ENCODE measurements at regions of chr12 and their contacts with region 1.

Region 1: DNA sequence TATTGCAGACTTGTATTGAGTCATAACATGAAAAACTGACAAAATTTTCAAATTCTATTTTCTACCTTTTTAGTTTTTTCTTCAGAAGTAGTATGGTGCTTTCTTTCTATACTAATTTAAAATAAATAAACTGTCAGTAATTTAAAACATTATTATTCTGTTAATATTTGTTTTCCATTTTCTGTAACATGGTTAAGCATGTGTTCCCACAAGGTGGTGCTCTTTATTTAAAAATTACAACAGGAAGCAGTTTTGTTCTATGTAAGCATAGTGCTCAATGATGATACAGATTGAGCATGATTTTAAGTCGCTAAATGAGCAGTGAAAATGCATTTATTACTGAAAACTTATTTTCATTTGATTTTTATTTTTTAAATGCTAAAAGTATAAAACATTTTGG is 114.6 kb downstream of the PPFIA2 start:
- DNase-seq: peak; percentile 38
- ATAC-seq: no peak
- H3K4me3 ChIP-seq: no peak overlapping the region
- H3K27ac ChIP-seq: no peak overlapping the region
- H3K4me1 ChIP-seq: no peaks in the 10 kb centered on the region
- H3K27me3 ChIP-seq: no peaks in the 10 kb centered on the region
- CTCF ChIP-seq: peak; percentile 43
- EP300 ChIP-seq: no peak
- POLR2A ChIP-seq: no peak
- RAD21 ChIP-seq: no peak

Region 2: GRCh38 chr12:81668475-81668874 is 24.0 kb after region 1 on chr12:
- CTCF ChIA-PET with region 1: no interaction called
- POLR2A ChIA-PET with region 1: no interaction called
- in situ Hi-C with region 1: no loop called
- intact Hi-C with region 1: no loop called
- DNase-seq: no peak
- ATAC-seq: no peak
- H3K4me3 ChIP-seq: no peak overlapping the region
- H3K27ac ChIP-seq: no peak overlapping the region
- H3K4me1 ChIP-seq: no peaks in the 10 kb centered on the region
- H3K27me3 ChIP-seq: no peaks in the 10 kb centered on the region
- CTCF ChIP-seq: no peak
- EP300 ChIP-seq: no peak
- POLR2A ChIP-seq: no peak
- RAD21 ChIP-seq: no peak

Region 3: GRCh38 chr12:81797100-81797499 is 152.6 kb after region 1 on chr12:
- CTCF ChIA-PET with region 1: interaction called, 3 read pairs
- POLR2A ChIA-PET with region 1: no interaction called
- in situ Hi-C with region 1: no loop called
- intact Hi-C with region 1: loop called (anchors 10 kb)
- DNase-seq: peak; percentile 6
- ATAC-seq: peak; percentile 66
- H3K4me3 ChIP-seq: no peak overlapping the region
- H3K27ac ChIP-seq: no peak overlapping the region
- H3K4me1 ChIP-seq: no peaks in the 10 kb centered on the region
- H3K27me3 ChIP-seq: no peaks in the 10 kb centered on the region
- CTCF ChIP-seq: no peak
- EP300 ChIP-seq: no peak
- POLR2A ChIP-seq: no peak
- RAD21 ChIP-seq: no peak

Region 4: DNA sequence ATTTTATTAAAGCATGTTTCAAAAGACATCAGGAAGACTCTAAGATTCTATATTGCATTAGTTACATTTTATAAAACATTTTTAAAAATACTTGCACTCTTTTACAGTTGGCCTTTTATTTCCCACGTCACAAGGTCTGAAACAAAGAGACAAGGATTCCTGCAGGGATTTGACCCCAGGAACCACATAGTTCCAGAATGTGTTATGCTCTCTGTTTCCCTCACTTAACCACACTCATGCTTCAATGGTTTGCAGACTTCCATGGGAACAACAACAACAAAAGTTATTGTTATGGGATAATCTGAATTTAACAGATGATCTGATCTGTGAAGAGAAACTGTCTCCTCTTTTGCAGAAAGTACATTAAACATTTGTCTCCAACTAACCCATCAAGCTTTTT is 218.9 kb after region 1 on chr12:
- CTCF ChIA-PET with region 1: no interaction called
- POLR2A ChIA-PET with region 1: no interaction called
- in situ Hi-C with region 1: no loop called
- intact Hi-C with region 1: no loop called
- DNase-seq: no peak
- ATAC-seq: no peak
- H3K4me3 ChIP-seq: no peak overlapping the region
- H3K27ac ChIP-seq: no peak overlapping the region
- H3K4me1 ChIP-seq: no peaks in the 10 kb centered on the region
- H3K27me3 ChIP-seq: no peaks in the 10 kb centered on the region
- CTCF ChIP-seq: no peak
- EP300 ChIP-seq: no peak
- POLR2A ChIP-seq: no peak
- RAD21 ChIP-seq: no peak

Region 5: DNA sequence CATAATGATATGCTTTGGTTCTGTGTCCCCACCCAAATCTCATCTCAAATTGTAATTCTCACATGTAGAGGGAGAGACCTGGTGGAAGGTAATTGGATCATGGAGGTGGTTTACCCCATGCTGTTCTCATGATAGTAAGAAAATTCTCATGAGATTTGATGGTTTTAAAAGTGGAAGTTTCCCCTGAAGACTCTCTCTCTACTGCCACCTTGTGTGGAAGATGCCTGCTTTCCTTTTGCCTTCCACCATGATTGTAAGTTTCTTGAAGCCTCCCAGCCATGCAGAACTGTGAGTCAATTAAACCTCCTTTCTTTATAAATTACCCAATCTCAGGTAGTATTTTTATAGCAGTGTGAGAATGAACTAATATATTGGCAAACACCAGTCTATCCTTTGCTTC is 375.0 kb after region 1 on chr12:
- CTCF ChIA-PET with region 1: no interaction called
- POLR2A ChIA-PET with region 1: no interaction called
- in situ Hi-C with region 1: no loop called
- intact Hi-C with region 1: loop called (anchors 10 kb)
- DNase-seq: no peak
- ATAC-seq: no peak
- H3K4me3 ChIP-seq: no peak overlapping the region
- H3K27ac ChIP-seq: no peak overlapping the region
- H3K4me1 ChIP-seq: no peaks in the 10 kb centered on the region
- H3K27me3 ChIP-seq: no peaks in the 10 kb centered on the region
- CTCF ChIP-seq: no peak
- EP300 ChIP-seq: no peak
- POLR2A ChIP-seq: no peak
- RAD21 ChIP-seq: no peak

Region 6: DNA sequence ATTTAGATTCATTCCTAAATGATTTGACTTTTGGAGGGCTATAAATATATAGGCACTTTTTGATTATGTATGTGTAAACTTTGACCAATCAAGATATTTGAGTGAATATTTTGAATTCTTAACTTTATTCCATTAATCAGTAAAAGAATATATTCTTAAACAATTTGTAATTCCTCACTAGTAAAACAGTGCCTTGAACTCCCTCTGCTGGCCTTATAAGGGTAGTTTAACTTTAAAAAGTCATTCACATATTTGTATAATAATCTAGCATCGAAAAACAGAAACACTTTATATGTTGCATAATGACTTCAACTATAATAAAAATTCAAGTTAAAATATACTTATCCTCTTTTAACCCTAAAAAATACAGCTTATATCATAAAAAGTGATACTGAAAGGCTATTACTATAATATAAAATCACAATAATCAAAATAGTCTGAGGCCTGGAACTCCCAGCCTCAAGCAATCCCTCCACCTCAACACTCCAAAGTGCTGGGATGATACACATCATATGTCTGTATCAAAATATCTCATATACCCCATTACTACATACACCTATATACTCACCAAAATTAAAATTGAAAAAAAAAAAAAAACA is 682.5 kb after region 1 on chr12:
- CTCF ChIA-PET with region 1: interaction called, 9 read pairs
- POLR2A ChIA-PET with region 1: no interaction called
- in situ Hi-C with region 1: loop called (anchors 10 kb)
- intact Hi-C with region 1: loop called (anchors 1 kb)
- DNase-seq: peak; percentile 13
- ATAC-seq: no peak
- H3K4me3 ChIP-seq: no peak overlapping the region
- H3K27ac ChIP-seq: no peak overlapping the region
- H3K4me1 ChIP-seq: no peaks in the 10 kb centered on the region
- H3K27me3 ChIP-seq: no peaks in the 10 kb centered on the region
- CTCF ChIP-seq: peak; percentile 37; the same call in 1 of the 2 replicates
- EP300 ChIP-seq: no peak
- POLR2A ChIP-seq: no peak
- RAD21 ChIP-seq: no peak

Region 7: GRCh38 chr12:82358200-82359114 is 714.0 kb after region 1 on chr12 and contains the starts of genes CCDC59 and METTL25:
- CTCF ChIA-PET with region 1: no interaction called
- POLR2A ChIA-PET with region 1: no interaction called
- in situ Hi-C with region 1: no loop called
- intact Hi-C with region 1: loop called (anchors 10 kb)
- DNase-seq: peak; percentile 95
- ATAC-seq: peak; percentile 93
- H3K4me3 ChIP-seq: peak within 1 kb of the TSS; percentile 84 to 95 (median 94)
- H3K27ac ChIP-seq: peak within 1 kb of the TSS; percentile 98
- H3K4me1 ChIP-seq: peaks cover 30% of the 10 kb centered on the region
- H3K27me3 ChIP-seq: no peaks in the 10 kb centered on the region; a peak in 1 of 5 replicates
- CTCF ChIP-seq: peak; percentile 93
- EP300 ChIP-seq: peak; percentile 46; a peak in 1 of 4 replicates
- POLR2A ChIP-seq: peak; percentile 89 to 90
- RAD21 ChIP-seq: peak; percentile 51
- total RNA-seq, gene CCDC59: 81.3 and 93.4 TPM in 2 replicates
- total RNA-seq, gene METTL25: 7.8 and 8.6 TPM in 2 replicates

Region 8: GRCh38 chr12:82627569-82628198 is 983.2 kb after region 1 on chr12:
- CTCF ChIA-PET with region 1: no interaction called
- POLR2A ChIA-PET with region 1: no interaction called
- in situ Hi-C with region 1: no loop called
- intact Hi-C with region 1: loop called (anchors 5 kb)
- DNase-seq: peak; percentile 21
- ATAC-seq: peak; percentile 85
- H3K4me3 ChIP-seq: no peak overlapping the region
- H3K27ac ChIP-seq: no peak overlapping the region
- H3K4me1 ChIP-seq: no peaks in the 10 kb centered on the region
- H3K27me3 ChIP-seq: no peaks in the 10 kb centered on the region
- CTCF ChIP-seq: peak; percentile 62
- EP300 ChIP-seq: no peak
- POLR2A ChIP-seq: no peak
- RAD21 ChIP-seq: 0 out of 2 replicates have a peak, but pooled peaks have one; percentile 12

Measured in HepG2 (cell line).